Prostate gland (tissue), 2 donors: ENCODE measurements at regions of chr1 and their contacts with region 1.

Region 1: GRCh38 chr1:33367485-33368405 is 46.8 kb upstream of the A3GALT2 start:
- DNase-seq: peak; percentile 85
- H3K4me3 ChIP-seq: no peak overlapping the region
- H3K27ac ChIP-seq: peak overlapping the region in 1 of 2 donors; percentile 9
- H3K4me1 ChIP-seq: peaks cover 16% of the 10 kb centered on the region
- H3K27me3 ChIP-seq: no peaks in the 10 kb centered on the region
- CTCF ChIP-seq: peak; percentile 86 to 98 (median 96)
- POLR2A ChIP-seq: no peak

Region 2: DNA sequence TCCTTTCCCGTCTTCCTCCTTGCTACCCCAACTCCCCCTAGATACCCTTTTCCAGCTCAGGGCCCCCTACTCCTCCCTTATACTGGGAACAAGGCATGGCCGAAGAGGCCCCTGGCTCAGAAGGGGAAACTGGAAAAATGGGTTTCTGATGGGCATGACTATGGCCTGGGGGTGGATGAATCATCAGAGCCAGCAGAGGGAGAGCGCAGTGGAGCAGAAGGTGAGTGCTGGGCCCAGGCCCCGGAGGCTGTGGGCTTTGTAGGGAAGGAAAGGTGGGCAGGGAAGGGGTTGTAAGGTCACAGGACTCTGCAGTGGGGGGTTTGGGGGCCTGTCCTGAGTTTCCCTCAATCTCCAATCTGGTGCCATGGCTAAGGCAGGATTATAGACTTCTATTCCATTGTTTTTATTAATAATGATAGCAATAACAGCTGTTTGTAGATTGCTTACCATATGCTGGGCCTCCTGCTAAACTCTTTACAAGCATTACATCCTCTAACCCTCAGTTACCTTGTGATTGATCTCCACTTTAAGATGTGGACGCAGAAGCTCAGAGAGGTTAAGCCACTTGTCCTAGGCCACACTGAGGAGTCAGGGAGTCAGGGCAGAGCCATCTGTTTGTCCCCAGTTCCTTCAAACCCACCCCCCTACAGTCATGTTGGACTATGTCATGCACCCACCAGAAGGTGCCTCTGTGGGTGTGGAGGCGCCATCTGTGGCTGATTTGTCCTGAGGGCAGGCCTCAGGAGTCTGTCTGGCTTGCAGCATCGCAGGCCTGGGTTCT is 147.7 kb before region 1 on chr1:
- intact Hi-C with region 1: loop called (anchors 5 kb)
- DNase-seq: peak; percentile 15
- H3K4me3 ChIP-seq: no peak overlapping the region
- H3K27ac ChIP-seq: no peak overlapping the region
- H3K4me1 ChIP-seq: no peaks in the 10 kb centered on the region
- H3K27me3 ChIP-seq: no peaks in the 10 kb centered on the region
- CTCF ChIP-seq: peak in 1 of 4 experiments; percentile 19
- POLR2A ChIP-seq: no peak

Region 3: GRCh38 chr1:33295450-33296081 is 72.2 kb before region 1 on chr1:
- intact Hi-C with region 1: loop called (anchors 2 kb)
- DNase-seq: peak; percentile 87
- H3K4me3 ChIP-seq: no peak overlapping the region
- H3K27ac ChIP-seq: no peak overlapping the region
- H3K4me1 ChIP-seq: no peaks in the 10 kb centered on the region
- H3K27me3 ChIP-seq: no peaks in the 10 kb centered on the region
- CTCF ChIP-seq: peak; percentile 97 to 99 (median 98)
- POLR2A ChIP-seq: no peak

Region 4: GRCh38 chr1:33338440-33339211 is 29.1 kb before region 1 on chr1:
- intact Hi-C with region 1: no loop called
- DNase-seq: peak; percentile 58
- H3K4me3 ChIP-seq: no peak overlapping the region
- H3K27ac ChIP-seq: peak overlapping the region; percentile 76 to 81
- H3K4me1 ChIP-seq: peaks cover 41% of the 10 kb centered on the region
- H3K27me3 ChIP-seq: no peaks in the 10 kb centered on the region
- CTCF ChIP-seq: no peak
- POLR2A ChIP-seq: no peak

Region 5: DNA sequence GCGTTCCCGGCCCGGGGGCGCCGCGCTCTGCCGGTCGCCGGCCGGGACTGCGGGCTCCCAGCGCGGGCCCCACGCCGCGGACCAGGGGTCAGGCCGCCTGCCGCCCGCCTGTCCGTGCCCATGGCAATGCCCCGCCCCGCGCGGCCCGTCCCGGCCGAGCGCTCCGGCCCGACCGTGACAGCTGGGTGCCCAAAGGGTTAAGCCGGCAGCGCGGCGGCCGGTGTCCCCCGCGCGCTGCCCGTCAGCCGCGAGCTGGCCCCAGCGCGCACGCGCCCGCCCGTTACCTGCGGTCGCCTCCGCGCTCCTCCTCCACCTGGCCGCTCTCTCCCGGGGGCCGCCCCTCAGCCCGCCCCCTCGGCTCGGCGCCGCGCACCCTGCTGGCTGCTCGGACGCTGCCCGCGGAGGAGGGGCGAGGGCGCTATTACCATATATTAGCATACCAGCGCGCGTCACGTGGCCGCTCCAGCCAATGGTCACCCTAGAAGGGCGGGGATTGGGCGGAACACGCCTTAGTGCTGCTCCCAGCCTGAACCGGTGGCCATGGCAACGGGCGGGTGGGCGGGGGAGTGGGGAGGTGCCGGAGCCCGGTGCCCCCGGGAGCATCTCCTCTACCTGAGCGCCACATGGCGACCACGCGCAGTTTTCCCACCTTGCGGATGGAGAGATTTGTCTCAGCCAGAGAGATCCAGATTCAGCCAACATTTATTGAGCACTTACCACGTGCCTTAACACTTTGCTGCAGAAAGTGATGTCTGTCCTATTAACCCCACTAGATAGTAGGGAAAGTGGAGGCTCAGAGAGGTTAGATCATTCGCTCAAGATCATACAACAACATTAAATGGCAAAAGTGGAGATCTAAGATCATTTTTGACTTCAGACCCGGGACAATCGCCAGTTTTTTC is 63.2 kb after region 1 on chr1 and contains the start of gene PHC2:
- intact Hi-C with region 1: loop called (anchors 5 kb)
- DNase-seq: peak; percentile 98
- H3K4me3 ChIP-seq: peak within 1 kb of the TSS; percentile 73 to 92
- H3K27ac ChIP-seq: peak within 1 kb of the TSS; percentile 68 to 78
- H3K4me1 ChIP-seq: no peaks in the 10 kb centered on the region
- H3K27me3 ChIP-seq: no peaks in the 10 kb centered on the region
- CTCF ChIP-seq: peak; percentile 28 to 86 (median 52)
- POLR2A ChIP-seq: peak; percentile 74
- total RNA-seq, gene PHC2: 75.0 to 131 TPM

Region 6: GRCh38 chr1:33472349-33472980 is 104.7 kb after region 1 on chr1 and contains the start of gene ZSCAN20:
- intact Hi-C with region 1: loop called (anchors 5 kb)
- DNase-seq: peak; percentile 96
- H3K4me3 ChIP-seq: peak within 1 kb of the TSS; percentile 41 to 44
- H3K27ac ChIP-seq: peak within 1 kb of the TSS; percentile 53 to 70
- H3K4me1 ChIP-seq: no peaks in the 10 kb centered on the region
- H3K27me3 ChIP-seq: no peaks in the 10 kb centered on the region
- CTCF ChIP-seq: peak in 2 of 4 experiments; percentile 18 to 28
- POLR2A ChIP-seq: peak; percentile 41
- total RNA-seq, gene ZSCAN20: 4.7 to 11.1 TPM